Aorta (tissue), 5 donors: ENCODE measurements at regions of chr18 and their contacts with region 1.

Region 1: DNA sequence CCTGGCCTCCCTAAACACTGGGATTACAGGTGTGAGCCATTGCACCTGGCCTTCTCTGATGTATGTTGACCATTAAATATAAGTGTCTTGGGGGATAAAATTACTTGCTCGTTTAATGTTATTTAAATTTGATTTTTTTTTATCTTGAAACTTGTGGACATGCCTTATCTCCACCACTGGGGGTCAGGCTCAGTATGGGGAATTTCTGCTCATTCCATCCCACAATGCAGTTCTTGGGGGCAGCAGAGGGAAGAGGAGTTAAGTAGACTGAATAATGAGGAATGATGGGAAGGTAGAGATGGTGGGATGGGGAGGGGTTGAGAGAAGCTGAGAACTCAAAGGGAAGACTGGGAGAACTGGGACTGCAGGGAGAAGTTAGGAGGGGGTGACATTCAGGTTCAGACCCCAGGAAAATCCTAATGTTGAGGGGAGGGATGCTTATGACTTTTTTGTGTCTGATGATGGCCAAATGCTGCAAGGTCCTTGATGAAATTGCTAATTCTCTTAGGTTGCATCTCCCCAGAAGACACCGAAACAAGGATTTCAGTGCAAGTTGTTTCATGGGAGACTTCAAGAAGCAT is 174.2 kb downstream of the MIB1 start:
- DNase-seq: no peak
- ATAC-seq: no peak
- H3K4me3 ChIP-seq: no peak overlapping the region
- H3K27ac ChIP-seq: no peak overlapping the region
- H3K4me1 ChIP-seq: no peaks in the 10 kb centered on the region
- H3K27me3 ChIP-seq: no peaks in the 10 kb centered on the region

Region 2: DNA sequence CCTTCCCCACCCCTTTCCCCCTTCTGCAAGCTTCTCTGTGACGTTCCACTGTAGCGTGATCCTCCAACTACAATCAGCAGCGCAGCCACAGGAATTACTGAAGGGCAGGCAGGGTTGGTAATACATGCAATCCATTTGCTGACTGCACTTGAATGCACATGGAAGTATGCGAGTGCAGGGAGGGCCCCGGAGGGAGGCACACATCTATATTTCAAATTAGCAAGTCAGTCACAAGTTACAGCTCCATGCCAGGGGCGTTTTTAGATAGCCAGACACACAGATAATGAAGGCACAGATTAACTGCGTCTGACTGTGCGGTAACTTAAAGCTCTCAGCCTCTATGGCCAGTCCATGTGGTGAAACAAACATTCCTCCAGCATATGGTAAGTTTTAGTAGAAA is 45.4 kb after region 1 on chr18:
- intact Hi-C with region 1: no loop called
- DNase-seq: no peak
- ATAC-seq: no peak
- H3K4me3 ChIP-seq: no peak overlapping the region
- H3K27ac ChIP-seq: no peak overlapping the region
- H3K4me1 ChIP-seq: no peaks in the 10 kb centered on the region
- H3K27me3 ChIP-seq: no peaks in the 10 kb centered on the region

Region 3: GRCh38 chr18:21972281-21972680 is 57.5 kb after region 1 on chr18:
- intact Hi-C with region 1: no loop called
- DNase-seq: no peak
- ATAC-seq: no peak
- H3K4me3 ChIP-seq: no peak overlapping the region
- H3K27ac ChIP-seq: no peak overlapping the region
- H3K4me1 ChIP-seq: no peaks in the 10 kb centered on the region
- H3K27me3 ChIP-seq: no peaks in the 10 kb centered on the region

Region 4: GRCh38 chr18:22159014-22159413 is 244.2 kb after region 1 on chr18:
- intact Hi-C with region 1: loop called in 1 of 2 experiments (anchors 5 kb)
- DNase-seq: no peak
- ATAC-seq: no peak
- H3K4me3 ChIP-seq: no peak overlapping the region
- H3K27ac ChIP-seq: no peak overlapping the region
- H3K4me1 ChIP-seq: no peaks in the 10 kb centered on the region
- H3K27me3 ChIP-seq: no peaks in the 10 kb centered on the region